Caco-2 (cell line): ENCODE measurements at regions of chrX and their contacts with region 1.

Region 1: DNA sequence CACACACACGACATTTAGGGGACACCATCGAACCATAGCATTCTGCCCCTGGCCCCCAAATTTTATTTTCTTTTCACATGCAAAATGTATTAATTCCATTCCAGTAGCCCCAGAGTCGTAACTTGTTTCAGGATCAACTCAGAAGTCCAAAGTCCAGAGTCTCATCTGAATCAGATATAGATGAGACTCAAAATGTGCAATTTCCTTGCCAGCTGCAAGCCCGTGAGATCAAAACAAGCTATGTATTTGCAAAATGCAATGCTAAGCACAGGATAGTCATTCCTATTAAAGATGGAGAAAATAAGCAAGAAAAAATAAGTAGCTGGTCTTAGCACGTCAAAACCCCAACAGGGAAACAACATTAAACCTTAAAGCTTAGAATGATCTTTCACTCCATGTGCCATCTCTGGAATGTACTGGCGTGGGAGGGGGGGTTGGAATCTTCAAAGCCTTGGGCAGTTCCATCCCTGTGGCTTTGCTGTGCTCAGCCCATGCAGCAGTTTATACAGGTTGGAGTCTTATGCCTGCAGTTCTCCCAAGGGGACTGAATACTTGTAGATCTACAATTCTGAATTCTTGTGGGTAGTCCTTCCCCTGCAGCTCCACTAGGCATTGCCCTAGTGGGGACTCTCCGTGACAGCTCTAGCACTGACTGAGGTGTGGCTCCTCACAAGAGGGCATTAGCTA is 47.7 kb upstream of the SYTL5 start:
- DNase-seq: peak; percentile 46 to 60
- H3K4me3 ChIP-seq: no peak overlapping the region
- H3K4me3 Mint-ChIP-seq: peak overlapping the region; percentile 52
- H3K27ac Mint-ChIP-seq: peak overlapping the region; percentile 66
- H3K4me1 ChIP-seq: peaks cover 21% of the 10 kb centered on the region
- H3K4me1 Mint-ChIP-seq: peaks cover 22% of the 10 kb centered on the region
- H3K27me3 ChIP-seq: no peaks in the 10 kb centered on the region
- H3K27me3 Mint-ChIP-seq: no peaks in the 10 kb centered on the region
- CTCF ChIP-seq: no peak

Region 2: DNA sequence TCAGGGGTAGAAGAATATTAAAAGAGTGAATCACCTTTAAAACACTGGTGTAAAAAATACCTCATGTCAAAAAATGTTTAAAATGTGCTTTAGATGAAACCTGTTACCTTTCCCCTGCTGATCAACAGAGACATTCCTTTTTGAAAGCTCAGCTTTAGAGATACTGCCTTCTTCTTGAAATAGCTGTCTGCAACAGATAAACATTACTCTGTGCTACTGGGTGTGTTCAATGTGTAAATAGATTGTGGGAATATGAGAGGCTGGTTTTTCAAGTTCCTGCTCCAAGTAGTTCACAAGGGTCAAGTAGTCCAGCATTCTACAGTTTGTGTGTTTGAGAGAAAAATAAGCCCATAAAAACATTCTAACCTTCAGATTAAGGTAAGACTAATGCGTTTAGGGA is 47.6 kb after region 1 on chrX and contains the start of gene SYTL5:
- CTCF ChIA-PET with region 1: no interaction called
- POLR2A ChIA-PET with region 1: no interaction called
- intact Hi-C with region 1: loop called (anchors 1 kb)
- DNase-seq: peak in 1 of 2 experiments; percentile 53
- H3K4me3 ChIP-seq: peak within 1 kb of the TSS; percentile 25
- H3K4me3 Mint-ChIP-seq: peak within 1 kb of the TSS; percentile 74
- H3K27ac Mint-ChIP-seq: peak within 1 kb of the TSS; percentile 90
- H3K4me1 ChIP-seq: peaks cover 33% of the 10 kb centered on the region
- H3K4me1 Mint-ChIP-seq: peaks cover 19% of the 10 kb centered on the region
- H3K27me3 ChIP-seq: no peaks in the 10 kb centered on the region
- H3K27me3 Mint-ChIP-seq: no peaks in the 10 kb centered on the region
- CTCF ChIP-seq: no peak
- total RNA-seq, gene SYTL5: 8.8 and 8.9 TPM in 2 replicates

Region 3: GRCh38 chrX:38142610-38143009 is 183.9 kb after region 1 on chrX:
- CTCF ChIA-PET with region 1: no interaction called
- POLR2A ChIA-PET with region 1: no interaction called
- intact Hi-C with region 1: no loop called
- DNase-seq: no peak
- H3K4me3 ChIP-seq: no peak overlapping the region
- H3K4me3 Mint-ChIP-seq: no peak overlapping the region
- H3K27ac Mint-ChIP-seq: no peak overlapping the region
- H3K4me1 ChIP-seq: no peaks in the 10 kb centered on the region
- H3K4me1 Mint-ChIP-seq: no peaks in the 10 kb centered on the region
- H3K27me3 ChIP-seq: no peaks in the 10 kb centered on the region
- H3K27me3 Mint-ChIP-seq: no peaks in the 10 kb centered on the region
- CTCF ChIP-seq: no peak